ENCODE measurements at regions of chr20 and their contacts with region 1.

Region 1: DNA sequence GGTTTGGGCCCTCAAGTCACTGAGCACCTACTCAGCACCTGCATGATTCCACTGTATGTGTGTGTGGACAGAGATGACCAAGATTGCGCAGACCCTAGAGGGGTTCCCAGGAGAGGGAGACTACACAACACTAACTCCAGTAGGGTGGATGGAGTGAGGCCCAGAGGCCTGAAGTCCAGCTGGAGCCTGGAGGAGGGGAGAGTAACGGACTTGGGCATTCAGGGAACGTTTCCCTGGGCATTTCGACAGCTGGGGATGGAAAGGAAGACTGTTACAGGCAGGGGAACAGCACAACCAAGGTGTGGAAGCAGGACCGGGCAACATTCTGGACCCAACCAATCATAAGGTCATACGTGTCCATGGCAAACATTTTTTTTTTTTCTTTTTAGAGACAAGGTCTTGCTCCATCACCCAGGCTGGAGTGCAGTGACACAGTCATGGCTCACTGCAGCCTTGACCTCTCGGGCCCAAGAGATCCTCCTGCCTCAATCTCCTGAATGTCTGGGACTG is 11.1 kb upstream of the CEBPB start:
- DNase-seq: no peak
- H3K4me3 ChIP-seq: no peak overlapping the region
- H3K27ac ChIP-seq: no peak overlapping the region
- H3K4me1 ChIP-seq: peaks cover 0 to 2% (median 0%) of the 10 kb centered on the region in 4 experiments
- H3K27me3 ChIP-seq: no peaks in the 10 kb centered on the region

Region 2: GRCh38 chr20:50115591-50116372 is 63.8 kb before region 1 on chr20:
- CTCF ChIA-PET with region 1: interaction called, 335 read pairs
- POLR2A ChIA-PET with region 1: interaction called, 9 read pairs
- DNase-seq: peak; percentile 93 to 95 (median 94)
- H3K4me3 ChIP-seq: peak overlapping the region in 6 of 7 experiments; percentile 69 to 96 (median 78)
- H3K27ac ChIP-seq: peak overlapping the region; percentile 40 to 71
- H3K4me1 ChIP-seq: peaks cover 33 to 54% (median 47%) of the 10 kb centered on the region in 4 experiments
- H3K27me3 ChIP-seq: no peaks in the 10 kb centered on the region

Region 3: DNA sequence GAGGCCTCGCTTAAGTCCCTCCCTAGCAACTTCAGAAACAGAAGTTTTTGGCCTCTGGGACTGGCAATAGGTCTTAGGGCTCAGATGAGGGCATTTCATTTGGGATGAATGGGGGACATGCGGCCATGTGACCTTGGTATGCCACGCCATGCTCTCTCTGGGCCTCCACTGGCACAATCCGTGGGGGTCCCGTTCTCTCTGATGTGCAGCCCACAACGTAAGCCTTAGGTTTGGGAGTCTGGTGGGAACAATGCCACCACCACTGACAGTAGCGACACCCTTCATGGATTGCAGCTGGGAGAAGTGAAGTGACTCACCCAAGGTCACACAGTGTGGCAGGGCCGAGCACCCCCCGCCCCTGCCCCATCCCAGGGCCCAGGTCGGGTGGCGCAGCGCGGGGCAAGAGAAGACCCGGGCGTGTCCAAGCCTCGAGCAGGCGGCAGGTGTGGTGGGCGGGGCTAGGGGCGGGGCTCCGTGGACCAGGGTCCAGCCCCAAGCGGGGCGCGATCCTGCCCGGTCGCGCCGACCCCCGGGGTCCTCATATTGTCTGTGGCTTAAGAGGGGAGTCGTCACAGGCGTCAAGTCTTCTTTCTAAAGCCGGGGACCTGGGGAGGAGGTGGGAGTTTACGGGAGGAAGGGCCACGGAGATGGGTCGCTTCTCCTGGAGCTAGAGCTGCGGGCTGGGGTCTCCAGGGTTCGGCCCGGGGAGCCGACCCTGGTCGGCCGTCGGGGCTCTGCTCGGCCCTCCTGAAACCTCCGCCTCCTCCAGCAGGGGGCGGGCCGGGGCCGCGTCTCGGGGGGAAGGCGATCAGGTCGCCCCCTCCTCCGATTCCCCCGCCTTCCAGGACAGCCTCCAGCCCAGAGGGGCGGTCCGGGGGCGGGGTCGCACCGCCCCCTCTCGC is 10.4 kb after region 1 on chr20:
- CTCF ChIA-PET with region 1: interaction called, 10 read pairs
- POLR2A ChIA-PET with region 1: no interaction called
- DNase-seq: peak; percentile 83 to 91 (median 90)
- H3K4me3 ChIP-seq: peak overlapping the region in 6 of 7 experiments; percentile 79 to 91 (median 86)
- H3K27ac ChIP-seq: peak overlapping the region; percentile 61 to 91
- H3K4me1 ChIP-seq: peaks cover 2 to 48% (median 38%) of the 10 kb centered on the region in 4 experiments
- H3K27me3 ChIP-seq: no peaks in the 10 kb centered on the region

Region 4: DNA sequence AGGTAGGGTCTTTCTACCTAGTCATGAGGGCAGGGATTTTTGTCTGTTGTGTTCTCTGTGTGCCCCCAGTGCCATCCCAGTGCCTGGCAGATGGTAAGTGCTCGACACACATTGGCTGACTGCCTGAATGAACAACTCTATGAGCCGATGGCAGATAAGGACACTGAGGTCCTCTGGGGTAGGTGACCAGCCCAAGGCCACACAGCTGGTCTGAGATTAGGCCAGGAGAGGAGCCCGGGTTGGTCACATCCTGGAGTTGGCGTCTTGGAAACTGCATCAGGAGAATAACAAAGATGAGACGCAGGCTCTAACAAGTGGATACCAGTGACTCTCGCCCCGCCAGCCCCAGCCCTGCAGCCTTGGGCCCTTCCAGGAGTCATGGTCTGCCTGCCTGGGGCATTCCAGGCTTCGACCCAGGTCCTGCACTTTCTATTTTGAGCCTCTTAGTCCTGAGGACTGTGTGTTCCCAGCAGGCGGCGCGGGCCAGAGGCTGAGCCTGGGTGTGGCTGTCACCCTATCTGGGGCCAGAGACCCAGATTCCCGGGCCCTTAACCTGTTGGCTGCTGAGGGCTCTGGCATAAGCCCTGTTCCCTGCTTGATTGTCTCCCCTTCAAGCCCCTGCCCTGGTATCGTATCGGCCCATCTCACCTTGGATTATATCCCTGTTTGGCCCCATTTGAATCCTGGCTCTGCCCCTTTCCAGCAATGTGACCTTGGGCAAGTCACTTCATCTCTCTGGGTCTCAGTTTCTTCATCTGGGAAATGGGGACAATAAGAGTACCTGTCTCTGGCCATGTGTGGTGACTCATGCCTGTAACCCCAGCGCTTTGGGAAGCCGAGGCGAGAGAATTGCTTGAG is 99.3 kb after region 1 on chr20:
- CTCF ChIA-PET with region 1: no interaction called
- POLR2A ChIA-PET with region 1: no interaction called
- DNase-seq: no peak
- H3K4me3 ChIP-seq: no peak overlapping the region
- H3K27ac ChIP-seq: no peak overlapping the region
- H3K4me1 ChIP-seq: peaks cover 7 to 65% (median 33%) of the 10 kb centered on the region in 4 experiments
- H3K27me3 ChIP-seq: no peaks in the 10 kb centered on the region